ENCODE measurements at regions of chr2 and their contacts with region 1.

Region 1: DNA sequence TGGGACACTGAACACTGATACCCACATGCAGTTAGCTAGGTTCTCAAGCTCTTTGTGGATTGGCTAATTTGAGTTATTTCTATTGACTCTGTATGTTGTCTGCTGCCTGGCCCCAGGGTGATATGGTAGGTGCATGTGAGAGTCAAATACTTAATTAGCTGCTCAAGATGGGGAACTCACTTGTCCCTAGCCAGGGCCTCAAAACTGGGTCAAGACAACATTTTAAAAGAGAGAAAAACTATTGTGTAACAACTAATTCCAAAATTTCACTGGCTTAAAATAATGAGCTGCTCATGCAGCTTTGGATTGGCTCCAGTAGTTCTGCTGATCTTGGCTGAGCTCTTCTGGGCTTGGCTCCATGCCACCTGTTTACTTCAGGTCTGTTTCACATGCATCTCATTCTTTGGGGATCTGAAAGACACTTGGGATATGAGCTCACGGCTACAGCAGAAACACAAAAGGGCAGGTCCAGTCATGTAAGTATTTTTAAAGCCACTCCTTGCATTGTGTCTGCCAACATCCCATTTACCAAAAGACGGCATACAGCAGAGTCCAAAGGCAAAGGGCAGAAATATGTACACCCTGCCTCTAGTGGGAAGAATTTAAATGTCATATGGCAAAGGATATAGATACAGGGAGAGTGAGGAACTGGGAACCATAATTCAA is 716.8 kb downstream of the SUCLG1 start:
- DNase-seq: no peak
- H3K4me3 ChIP-seq: no peak overlapping the region
- H3K27ac ChIP-seq: no peak overlapping the region
- H3K4me1 ChIP-seq: no peaks in the 10 kb centered on the region
- H3K27me3 ChIP-seq: no peaks in the 10 kb centered on the region
- CTCF ChIP-seq: no peak
- EP300 ChIP-seq: no peak
- POLR2A ChIP-seq: no peak

Region 2: GRCh38 chr2:82027901-82028615 is 1714.2 kb before region 1 on chr2:
- in situ Hi-C with region 1: no loop called
- intact Hi-C with region 1: loop called (anchors 5 kb)
- DNase-seq: no peak
- H3K4me3 ChIP-seq: no peak overlapping the region
- H3K27ac ChIP-seq: no peak overlapping the region
- H3K4me1 ChIP-seq: no peaks in the 10 kb centered on the region
- H3K27me3 ChIP-seq: no peaks in the 10 kb centered on the region
- CTCF ChIP-seq: no peak
- EP300 ChIP-seq: no peak
- POLR2A ChIP-seq: no peak

Measured in transverse colon (tissue), 4 donors.